GM12878 (cell line): ENCODE measurements at regions of chrX and their contacts with region 1.

Region 1: GRCh38 chrX:140664939-140665338 is 44.6 kb upstream of the LINC00632 start:
- DNase-seq: no peak
- ATAC-seq: peak; percentile 62; the same call in 2 of the 3 replicates
- H3K4me3 ChIP-seq: no peak overlapping the region
- H3K27ac ChIP-seq: no peak overlapping the region
- H3K4me1 ChIP-seq: no peaks in the 10 kb centered on the region
- H3K27me3 ChIP-seq: no peaks in the 10 kb centered on the region
- CTCF ChIP-seq: peak in 2 of 3 experiments; percentile 14 to 17; a peak in 3 of 6 replicates
- EP300 ChIP-seq: no peak
- POLR2A ChIP-seq: no peak
- RAD21 ChIP-seq: peak; percentile 38; the same call in 1 of the 2 replicates

Region 2: GRCh38 chrX:140057001-140057411 is 607.9 kb before region 1 on chrX:
- CTCF ChIA-PET with region 1: interaction called, 3 read pairs
- POLR2A ChIA-PET with region 1: no interaction called
- RAD21 ChIA-PET with region 1: no interaction called
- SMC1A ChIA-PET with region 1: no interaction called
- in situ Hi-C with region 1: loop called (anchors 25 kb)
- intact Hi-C with region 1: loop called (anchors 1 kb)
- DNase-seq: peak; percentile 5
- ATAC-seq: peak; percentile 99
- H3K4me3 ChIP-seq: no peak overlapping the region
- H3K27ac ChIP-seq: no peak overlapping the region
- H3K4me1 ChIP-seq: no peaks in the 10 kb centered on the region
- H3K27me3 ChIP-seq: no peaks in the 10 kb centered on the region
- CTCF ChIP-seq: peak; percentile 81 to 93 (median 90)
- EP300 ChIP-seq: no peak
- POLR2A ChIP-seq: no peak
- RAD21 ChIP-seq: peak; percentile 71

Region 3: GRCh38 chrX:140572724-140573123 is 92.2 kb before region 1 on chrX:
- CTCF ChIA-PET with region 1: interaction called, 9 read pairs
- POLR2A ChIA-PET with region 1: no interaction called
- RAD21 ChIA-PET with region 1: interaction called, 5 read pairs
- SMC1A ChIA-PET with region 1: interaction called, 4 read pairs
- in situ Hi-C with region 1: no loop called
- intact Hi-C with region 1: loop called (anchors 5 kb)
- DNase-seq: peak; percentile 3
- ATAC-seq: peak; percentile 93
- H3K4me3 ChIP-seq: no peak overlapping the region
- H3K27ac ChIP-seq: no peak overlapping the region
- H3K4me1 ChIP-seq: no peaks in the 10 kb centered on the region
- H3K27me3 ChIP-seq: no peaks in the 10 kb centered on the region
- CTCF ChIP-seq: peak; percentile 66 to 80 (median 72)
- EP300 ChIP-seq: no peak
- POLR2A ChIP-seq: no peak
- RAD21 ChIP-seq: peak; percentile 40